Ascending aorta (tissue), 2 donors: ENCODE measurements at regions of chr4 and their contacts with region 1.

Region 1: GRCh38 chr4:185656467-185656931 is 121.2 kb upstream of the PDLIM3 start:
- DNase-seq: peak in 1 of 2 donors; percentile 80
- H3K4me3 ChIP-seq: peak overlapping the region; percentile 43 to 72
- H3K27ac ChIP-seq: peak overlapping the region; percentile 69 to 77
- H3K4me1 ChIP-seq: peaks cover 0 to 6% of the 10 kb centered on the region in 2 donors
- H3K27me3 ChIP-seq: no peaks in the 10 kb centered on the region
- CTCF ChIP-seq: peak; percentile 56 to 79 (median 76)

Region 2: DNA sequence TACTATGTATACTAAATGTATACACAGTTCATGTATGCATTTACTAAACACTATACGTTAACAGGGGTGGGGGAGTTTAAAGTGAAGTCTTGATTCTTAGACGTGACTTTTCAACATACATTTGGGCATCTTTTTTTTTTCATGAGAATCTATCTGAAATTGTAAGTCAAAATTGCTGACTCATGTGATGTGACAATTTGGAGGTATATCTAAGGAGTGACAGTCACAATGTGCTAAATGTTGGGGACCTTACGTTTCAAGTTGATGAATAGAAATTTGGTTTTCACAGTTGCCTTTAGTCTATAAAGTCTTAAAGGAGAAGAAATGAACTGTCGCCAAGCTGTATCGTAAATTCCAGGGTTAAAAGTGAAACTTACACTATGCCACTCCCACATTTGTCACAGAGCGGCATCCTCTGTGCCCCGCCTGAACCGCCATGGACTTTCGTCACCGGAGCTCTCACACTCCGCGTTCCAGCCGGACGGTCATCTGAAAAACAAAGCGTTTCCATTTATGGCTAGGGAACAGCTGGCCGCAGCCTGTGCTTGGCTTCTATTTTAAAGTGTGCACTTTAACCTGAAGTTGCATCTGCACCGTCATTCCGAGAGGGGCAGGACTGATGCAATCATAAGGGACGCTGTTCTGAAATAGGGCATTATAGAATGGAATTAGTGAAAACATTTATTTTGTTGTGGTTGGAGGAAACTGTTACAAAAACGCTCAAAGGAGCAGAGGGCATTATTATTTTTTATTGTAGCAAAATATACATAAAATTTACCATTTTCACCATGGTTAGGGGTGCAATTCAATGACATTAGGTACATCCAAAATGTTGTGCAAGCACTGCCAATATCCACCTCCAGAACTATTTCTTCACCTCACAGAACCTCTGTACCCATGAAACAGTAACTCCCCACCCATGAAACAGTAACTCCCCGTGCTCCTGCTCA is 152.1 kb before region 1 on chr4:
- intact Hi-C with region 1: no loop called
- DNase-seq: peak in 1 of 2 donors; percentile 92
- H3K4me3 ChIP-seq: peak overlapping the region in 1 of 2 donors; percentile 10
- H3K27ac ChIP-seq: peak overlapping the region; percentile 70
- H3K4me1 ChIP-seq: no peaks in the 10 kb centered on the region
- H3K27me3 ChIP-seq: no peaks in the 10 kb centered on the region
- CTCF ChIP-seq: no peak

Region 3: DNA sequence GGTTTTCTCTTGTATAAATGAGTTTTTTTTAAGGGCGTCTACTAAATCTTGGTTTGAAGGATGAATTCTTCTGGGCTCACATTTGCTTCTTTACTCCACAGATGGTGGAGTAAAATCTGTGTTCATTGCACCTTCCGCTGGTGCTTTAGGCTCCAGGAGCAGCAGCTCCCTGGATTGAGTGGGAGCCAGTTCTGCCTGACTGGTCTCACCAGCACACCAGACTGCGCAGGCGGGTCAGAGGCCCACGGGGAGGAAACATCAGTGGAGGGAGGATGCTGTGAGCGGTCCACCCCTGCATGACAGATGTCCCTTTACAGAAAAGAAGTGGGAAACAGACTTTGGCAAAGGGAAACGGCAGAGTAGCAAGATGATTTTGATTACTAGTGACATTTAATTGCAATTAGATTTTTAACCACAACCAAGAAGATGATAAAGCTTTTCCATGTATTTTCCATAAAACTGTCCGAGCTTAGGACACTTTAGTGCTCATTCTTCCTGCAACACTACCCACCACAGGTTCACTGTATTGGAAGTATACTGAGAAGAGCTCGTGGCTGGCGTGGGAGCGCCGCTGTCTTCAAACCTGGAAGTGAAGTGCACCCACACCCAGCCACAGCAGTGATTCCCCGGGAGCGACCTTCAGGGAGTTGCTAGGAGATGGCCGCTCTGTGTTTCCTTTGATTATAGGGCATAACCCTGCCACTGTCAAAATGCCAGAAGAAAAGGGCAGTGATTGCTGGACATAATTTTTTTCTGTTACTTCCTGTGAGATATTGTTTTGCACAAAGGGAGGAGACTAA is 60.3 kb after region 1 on chr4:
- intact Hi-C with region 1: loop called (anchors 5 kb)
- DNase-seq: no peak
- H3K4me3 ChIP-seq: no peak overlapping the region
- H3K27ac ChIP-seq: peak overlapping the region in 1 of 2 donors; percentile 19
- H3K4me1 ChIP-seq: peaks cover 3 to 12% of the 10 kb centered on the region in 2 donors
- H3K27me3 ChIP-seq: no peaks in the 10 kb centered on the region
- CTCF ChIP-seq: no peak

Region 4: DNA sequence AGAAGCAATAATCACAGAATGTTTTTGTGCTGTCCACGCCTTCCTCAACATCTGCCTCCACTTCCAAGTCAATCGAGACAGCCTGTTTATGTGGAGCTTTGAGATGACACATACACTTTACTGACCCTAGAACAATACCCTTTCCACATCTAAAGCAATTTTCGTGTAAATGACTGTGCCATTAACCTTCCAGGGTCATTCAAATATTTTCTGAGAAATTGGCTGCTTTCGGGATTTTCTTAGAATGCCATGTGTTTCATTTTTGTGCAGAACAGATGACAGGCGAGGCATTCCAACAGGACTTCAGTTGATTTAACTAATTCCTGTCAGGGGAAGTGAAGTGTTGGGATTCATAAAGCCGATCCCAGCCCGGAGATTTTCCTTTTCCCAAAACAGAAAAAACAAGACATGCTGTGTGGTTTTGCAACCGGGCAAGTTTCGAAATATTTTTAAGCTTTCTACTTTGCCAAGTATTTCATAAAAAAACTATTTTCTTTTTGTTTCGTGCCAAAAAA is 81.6 kb after region 1 on chr4:
- intact Hi-C with region 1: loop called (anchors 2 kb)
- DNase-seq: no peak
- H3K4me3 ChIP-seq: peak overlapping the region; percentile 1 to 43
- H3K27ac ChIP-seq: peak overlapping the region; percentile 81 to 90
- H3K4me1 ChIP-seq: peaks cover 13 to 55% of the 10 kb centered on the region in 2 donors
- H3K27me3 ChIP-seq: no peaks in the 10 kb centered on the region
- CTCF ChIP-seq: no peak

Region 5: GRCh38 chr4:185774845-185775680 is 118.6 kb after region 1 on chr4:
- intact Hi-C with region 1: loop called (anchors 2 kb)
- DNase-seq: peak in 1 of 2 donors; percentile 76
- H3K4me3 ChIP-seq: peak overlapping the region; percentile 55 to 64
- H3K27ac ChIP-seq: peak overlapping the region; percentile 52 to 81
- H3K4me1 ChIP-seq: peaks cover 0 to 24% of the 10 kb centered on the region in 2 donors
- H3K27me3 ChIP-seq: no peaks in the 10 kb centered on the region
- CTCF ChIP-seq: no peak

Region 6: DNA sequence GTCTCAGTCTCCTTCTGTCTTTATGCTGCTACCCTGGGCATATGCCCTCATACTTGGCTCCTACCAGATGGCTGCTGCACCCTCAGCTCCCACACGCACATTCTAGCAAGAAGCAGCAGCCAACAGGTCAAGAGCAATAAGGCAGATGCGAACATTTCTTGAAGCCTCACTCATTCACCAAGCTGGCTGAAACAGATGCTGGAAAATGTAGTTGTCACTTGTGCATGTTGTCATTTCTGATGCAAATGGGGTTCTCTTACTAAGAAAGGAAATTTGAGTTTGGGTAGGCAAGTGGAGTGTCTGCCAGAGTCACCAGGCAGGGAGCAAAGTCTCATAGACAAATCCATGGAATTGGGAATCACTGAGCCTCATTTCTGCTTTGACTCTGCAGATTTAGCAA is 212.9 kb after region 1 on chr4:
- intact Hi-C with region 1: loop called (anchors 2 kb)
- DNase-seq: no peak
- H3K4me3 ChIP-seq: no peak overlapping the region
- H3K27ac ChIP-seq: peak overlapping the region; percentile 53 to 74
- H3K4me1 ChIP-seq: peaks cover 2 to 15% of the 10 kb centered on the region in 2 donors
- H3K27me3 ChIP-seq: no peaks in the 10 kb centered on the region
- CTCF ChIP-seq: no peak

Region 7: DNA sequence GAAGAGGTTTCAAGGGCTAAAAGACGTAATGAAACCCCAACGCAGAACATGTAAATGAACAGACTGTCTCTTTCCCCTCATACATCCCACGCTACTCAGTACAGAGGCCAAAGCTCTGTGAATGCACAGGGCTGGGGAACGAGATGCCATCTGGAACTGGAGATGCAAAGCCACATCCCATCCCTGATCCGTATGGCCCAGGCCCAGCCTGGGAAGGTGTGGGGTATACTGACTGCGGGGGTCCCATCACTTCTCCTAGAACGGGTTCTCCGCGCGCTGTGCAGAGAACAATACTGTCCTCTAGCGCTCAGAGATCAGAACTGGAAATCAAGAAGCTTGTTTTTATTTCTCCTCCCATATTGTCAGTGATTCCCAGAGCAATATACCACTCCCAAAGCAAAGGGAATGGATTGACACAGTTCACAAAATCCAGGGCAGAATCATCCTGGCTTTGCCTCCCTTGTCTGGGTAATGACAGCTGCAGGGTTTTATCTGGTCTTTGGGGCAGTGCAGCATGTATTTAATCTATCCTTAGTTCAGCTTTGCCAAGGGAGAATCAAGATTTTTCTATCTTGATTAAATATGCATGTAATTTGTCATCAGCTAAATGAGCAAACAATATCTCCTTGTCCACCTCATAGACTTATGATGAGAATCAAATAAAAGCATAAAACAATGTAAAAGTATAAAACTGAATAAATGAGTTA is 365.1 kb after region 1 on chr4:
- intact Hi-C with region 1: loop called (anchors 5 kb)
- DNase-seq: no peak
- H3K4me3 ChIP-seq: peak overlapping the region; percentile 45
- H3K27ac ChIP-seq: peak overlapping the region in 1 of 2 donors; percentile 2
- H3K4me1 ChIP-seq: peaks cover 0 to 8% of the 10 kb centered on the region in 2 donors
- H3K27me3 ChIP-seq: no peaks in the 10 kb centered on the region
- CTCF ChIP-seq: peak; percentile 71 to 91 (median 89)

Region 8: GRCh38 chr4:186144142-186144955 is 487.9 kb after region 1 on chr4:
- intact Hi-C with region 1: loop called (anchors 10 kb)
- DNase-seq: peak in 1 of 2 donors; percentile 78
- H3K4me3 ChIP-seq: peak overlapping the region; percentile 71 to 85
- H3K27ac ChIP-seq: peak overlapping the region; percentile 70 to 91
- H3K4me1 ChIP-seq: peaks cover 4 to 6% of the 10 kb centered on the region in 2 donors
- H3K27me3 ChIP-seq: no peaks in the 10 kb centered on the region
- CTCF ChIP-seq: peak in 1 of 3 experiments; percentile 24